ENCODE measurements at regions of chr11 and their contacts with region 1.

Region 1: DNA sequence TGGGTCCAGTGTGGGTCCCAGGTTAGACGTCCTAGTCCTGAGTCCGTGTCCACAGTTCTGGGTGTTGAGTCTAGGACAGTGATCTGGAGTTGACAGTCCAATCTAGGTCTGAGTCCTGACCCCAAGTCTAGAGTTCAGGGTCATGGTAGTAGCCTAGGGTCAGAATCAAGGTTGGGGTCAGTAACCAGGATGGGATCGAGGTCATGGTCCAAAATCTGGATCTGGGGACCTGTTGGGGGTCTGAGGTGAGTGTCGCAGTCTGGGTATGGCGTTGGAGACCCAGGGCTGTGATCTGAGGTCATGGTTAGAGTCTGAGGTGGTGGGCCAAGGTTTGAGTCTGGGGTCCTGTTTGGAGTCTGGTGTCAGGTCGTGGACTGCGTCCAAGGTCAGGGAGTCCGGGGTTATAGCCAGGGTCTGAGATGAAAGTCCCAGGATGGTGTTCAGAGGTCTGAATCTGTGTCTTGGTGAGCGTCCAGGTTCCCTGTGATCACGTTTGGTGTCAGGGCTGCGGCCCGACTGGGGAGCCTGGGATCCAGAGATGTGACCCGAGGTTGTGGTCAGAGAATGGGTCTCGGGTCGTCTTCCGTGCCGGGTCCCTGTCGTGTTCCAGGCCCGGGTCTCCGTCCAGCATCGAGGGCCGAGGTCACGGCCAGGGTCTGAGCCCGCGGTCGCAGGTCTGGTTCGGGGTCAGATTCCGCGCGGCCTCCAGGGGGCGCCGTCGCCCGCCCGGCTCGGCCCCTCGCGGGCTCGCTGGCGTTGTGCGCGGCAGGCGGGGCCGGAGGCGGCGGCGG is 445 bp upstream of the GRK2 start:
- DNase-seq: peak in 41 of 42 donors; percentile 48 to 92 (median 82)

Region 2: DNA sequence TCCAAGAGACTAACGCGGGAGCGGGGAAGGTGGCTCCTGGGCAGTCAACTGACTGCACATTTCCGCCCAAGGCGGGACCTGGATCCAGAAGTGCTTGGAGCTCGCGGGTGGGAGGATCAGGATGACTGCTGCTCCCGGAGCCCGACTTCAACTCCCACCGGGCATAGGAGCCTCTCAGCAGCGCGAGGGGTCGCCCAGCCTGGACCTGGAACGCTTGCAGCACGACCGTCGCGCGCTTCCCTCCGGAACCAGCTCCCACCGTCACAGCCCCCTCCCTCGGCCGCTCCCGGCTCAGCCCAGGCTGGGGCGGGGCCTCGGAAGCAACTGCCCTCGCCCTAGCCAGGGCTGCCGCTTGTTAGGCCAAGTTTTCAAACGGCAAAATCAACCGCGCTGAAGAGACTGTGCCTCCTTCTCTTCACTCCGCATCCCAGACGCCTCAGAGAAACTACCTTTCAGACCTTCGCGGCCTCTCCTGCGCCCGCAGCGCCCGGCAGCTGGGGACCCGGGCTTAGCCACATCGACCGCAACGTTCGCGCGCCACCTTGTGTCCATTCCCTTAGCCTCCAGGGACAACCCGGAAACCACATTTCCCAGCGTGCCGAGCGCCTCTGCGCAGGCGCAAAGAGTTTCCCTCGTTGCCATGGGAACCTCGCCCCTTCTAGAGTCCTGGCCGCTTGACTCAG is 51.5 kb after region 1 on chr11:
- intact Hi-C with region 1: loop called (anchors 2 kb)
- DNase-seq: peak; percentile 92 to 100 (median 98)

Region 3: DNA sequence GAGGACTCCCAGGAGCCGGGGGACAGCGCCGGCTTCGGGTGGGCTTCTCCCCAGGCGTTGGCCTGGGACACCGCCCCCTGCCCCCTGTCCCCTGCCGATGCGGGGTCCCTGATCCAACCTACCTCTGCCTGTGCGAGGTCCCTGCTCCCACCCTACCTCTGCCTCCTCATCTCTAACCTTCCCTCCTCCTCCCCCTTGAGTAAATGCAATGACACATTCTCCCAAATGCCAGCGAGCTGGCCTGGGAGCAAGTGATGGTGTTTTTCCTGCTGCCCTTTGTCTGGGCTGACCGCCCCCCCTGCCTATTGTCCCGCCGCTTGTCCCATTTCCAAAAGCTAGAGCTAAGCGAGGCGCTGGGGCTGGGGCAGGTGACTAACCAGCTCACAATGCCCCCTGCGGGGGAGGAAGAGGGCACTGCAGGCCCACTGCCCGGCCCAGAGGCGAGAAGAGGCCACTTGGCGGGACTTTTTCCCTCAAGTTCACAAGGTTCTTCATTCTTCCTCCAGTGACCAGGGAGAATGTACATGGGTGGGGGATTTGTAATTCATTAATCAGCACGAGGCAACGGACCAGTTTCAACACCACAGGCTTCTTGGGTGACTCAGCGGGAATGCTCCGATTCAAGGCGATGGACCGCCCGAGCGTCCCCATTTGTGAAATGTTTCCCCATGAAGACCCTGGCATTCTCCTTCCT is 108.2 kb after region 1 on chr11:
- intact Hi-C with region 1: loop called (anchors 10 kb)
- DNase-seq: peak in 24 of 42 donors; percentile 31 to 84 (median 52)

Measured in head of caudate nucleus (tissue), 42 donors.